ENCODE measurements at regions of chr4 and their contacts with region 1.

Region 1: DNA sequence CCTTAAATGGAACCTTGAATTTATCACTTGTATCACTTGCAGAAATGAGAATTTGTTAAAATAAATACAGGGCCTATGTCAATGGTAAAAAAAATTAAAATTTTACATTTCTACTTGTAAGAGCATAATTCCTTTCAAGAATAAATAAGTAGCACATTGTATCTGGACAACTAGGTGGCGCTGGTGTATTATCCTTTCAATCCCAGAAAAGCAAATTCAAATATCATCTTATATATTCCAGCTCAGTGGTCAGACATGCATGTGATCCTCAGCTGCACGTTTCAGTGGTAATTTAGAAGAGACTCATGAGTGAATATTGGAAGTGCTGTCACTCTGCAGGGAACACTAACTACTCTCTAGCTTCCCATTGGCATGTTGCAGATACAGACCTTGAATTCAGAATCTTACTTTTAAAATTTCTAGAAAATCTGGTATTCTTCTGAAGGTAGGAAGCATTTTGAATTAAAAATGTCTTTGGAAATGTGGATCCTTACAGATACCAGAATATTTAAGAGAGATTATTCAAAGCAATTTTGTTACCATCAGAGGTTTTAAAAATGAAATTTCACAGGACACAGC is 1414.7 kb upstream of the TENM3 start:
- DNase-seq: peak; percentile 74 to 84
- H3K4me3 ChIP-seq: no peak overlapping the region
- H3K4me1 ChIP-seq: peaks cover 25% of the 10 kb centered on the region
- H3K27me3 ChIP-seq: no peaks in the 10 kb centered on the region

Region 2: GRCh38 chr4:180538384-180539057 is 290.0 kb before region 1 on chr4:
- in situ Hi-C with region 1: no loop called
- DNase-seq: peak in 1 of 2 experiments; percentile 46
- H3K4me3 ChIP-seq: no peak overlapping the region
- H3K4me1 ChIP-seq: peaks cover 51% of the 10 kb centered on the region
- H3K27me3 ChIP-seq: no peaks in the 10 kb centered on the region

Region 3: GRCh38 chr4:180947425-180947824 is 118.9 kb after region 1 on chr4:
- in situ Hi-C with region 1: loop called (anchors 10 kb)
- DNase-seq: peak; percentile 14 to 65
- H3K4me3 ChIP-seq: no peak overlapping the region
- H3K4me1 ChIP-seq: peaks cover 17% of the 10 kb centered on the region
- H3K27me3 ChIP-seq: no peaks in the 10 kb centered on the region

Measured in HAP-1 (cell line).